Activated CD4-positive, alpha-beta memory T cell treated with anti-CD3 and anti-CD28 coated beads, Interleukin-2, amount 10 ng/mL, durations not matched to agents 7 days and 5 days (primary cell): ENCODE measurements at regions of chr1 and their contacts with region 1.

Region 1: DNA sequence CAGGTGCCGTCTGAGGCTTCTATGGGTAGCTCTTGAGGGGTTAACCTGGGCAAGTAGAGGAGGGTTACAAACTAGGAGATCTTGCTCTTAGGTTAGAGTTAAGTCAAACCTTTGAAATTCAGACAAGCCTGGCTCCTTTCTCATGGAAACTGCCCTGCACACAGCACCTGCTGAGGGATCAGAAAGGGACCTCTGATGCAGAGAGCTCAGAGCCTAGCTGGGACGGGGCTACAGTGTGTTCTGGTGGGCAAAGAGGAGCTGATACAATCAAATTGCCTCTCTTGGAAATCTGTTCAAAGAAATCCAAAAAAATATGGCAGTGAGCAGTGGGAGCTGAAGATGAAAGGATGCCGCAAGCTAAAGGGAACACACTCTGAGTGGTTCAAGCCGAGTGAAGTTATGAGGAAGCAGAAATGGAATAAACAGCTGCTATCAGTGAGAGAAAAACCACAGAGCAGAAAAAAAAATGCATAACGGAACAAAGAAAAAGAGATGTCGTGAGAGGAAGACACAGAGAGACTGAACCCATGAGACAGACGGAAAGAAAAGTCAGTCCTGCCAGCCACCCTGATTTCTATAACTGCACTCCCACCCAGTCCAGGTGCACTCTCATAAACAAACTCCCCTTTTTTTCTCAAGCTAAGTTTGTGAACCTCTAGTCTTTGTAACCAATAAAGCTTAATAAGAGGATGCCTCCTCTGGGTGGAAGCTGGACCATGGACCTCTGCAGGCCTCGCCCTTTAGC is 26.6 kb downstream of the PAFAH2 start:
- DNase-seq: no peak
- H3K4me3 Mint-ChIP-seq: no peak overlapping the region
- H3K27ac Mint-ChIP-seq: peak overlapping the region; percentile 72
- H3K4me1 Mint-ChIP-seq: peaks cover 19% of the 10 kb centered on the region
- H3K27me3 Mint-ChIP-seq: no peaks in the 10 kb centered on the region

Region 2: DNA sequence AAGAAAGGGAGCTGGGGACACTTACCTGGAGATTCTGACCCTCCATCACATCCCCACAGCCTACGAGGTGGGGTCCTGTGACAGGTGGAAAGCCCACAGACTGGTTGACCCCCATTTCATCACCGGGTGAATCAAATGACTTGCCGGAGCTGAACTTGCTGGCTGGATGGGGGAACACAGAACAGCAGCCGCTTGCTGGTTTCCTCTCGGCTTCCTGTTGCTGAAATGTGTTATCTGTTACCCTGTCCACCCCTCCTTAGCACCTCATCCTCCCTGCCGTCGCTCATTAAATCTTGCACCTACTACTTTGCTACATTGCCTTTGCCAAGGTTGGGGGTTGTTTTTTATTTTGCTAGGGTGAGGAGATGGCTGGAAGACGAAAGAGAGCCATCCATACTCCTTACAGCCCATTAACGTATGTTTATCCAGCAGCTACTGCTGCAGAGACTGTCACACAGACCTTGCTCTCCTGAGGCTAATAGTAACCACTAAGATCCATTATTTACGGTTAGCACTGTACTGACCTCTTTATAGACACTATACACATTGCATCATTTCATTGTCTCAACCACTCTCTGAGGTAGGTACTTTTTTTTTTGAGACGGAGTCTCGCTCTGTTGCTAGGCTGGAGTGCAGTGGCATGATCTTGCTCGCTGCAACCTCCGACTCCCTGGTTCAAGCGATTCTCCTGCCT is 19.6 kb after region 1 on chr1:
- CTCF ChIA-PET with region 1: interaction called, 5 read pairs
- POLR2A ChIA-PET with region 1: interaction called, 23 read pairs
- DNase-seq: peak; percentile 61
- H3K4me3 Mint-ChIP-seq: peak overlapping the region; percentile 78
- H3K27ac Mint-ChIP-seq: peak overlapping the region; percentile 72
- H3K4me1 Mint-ChIP-seq: peaks cover 38% of the 10 kb centered on the region
- H3K27me3 Mint-ChIP-seq: no peaks in the 10 kb centered on the region

Region 3: DNA sequence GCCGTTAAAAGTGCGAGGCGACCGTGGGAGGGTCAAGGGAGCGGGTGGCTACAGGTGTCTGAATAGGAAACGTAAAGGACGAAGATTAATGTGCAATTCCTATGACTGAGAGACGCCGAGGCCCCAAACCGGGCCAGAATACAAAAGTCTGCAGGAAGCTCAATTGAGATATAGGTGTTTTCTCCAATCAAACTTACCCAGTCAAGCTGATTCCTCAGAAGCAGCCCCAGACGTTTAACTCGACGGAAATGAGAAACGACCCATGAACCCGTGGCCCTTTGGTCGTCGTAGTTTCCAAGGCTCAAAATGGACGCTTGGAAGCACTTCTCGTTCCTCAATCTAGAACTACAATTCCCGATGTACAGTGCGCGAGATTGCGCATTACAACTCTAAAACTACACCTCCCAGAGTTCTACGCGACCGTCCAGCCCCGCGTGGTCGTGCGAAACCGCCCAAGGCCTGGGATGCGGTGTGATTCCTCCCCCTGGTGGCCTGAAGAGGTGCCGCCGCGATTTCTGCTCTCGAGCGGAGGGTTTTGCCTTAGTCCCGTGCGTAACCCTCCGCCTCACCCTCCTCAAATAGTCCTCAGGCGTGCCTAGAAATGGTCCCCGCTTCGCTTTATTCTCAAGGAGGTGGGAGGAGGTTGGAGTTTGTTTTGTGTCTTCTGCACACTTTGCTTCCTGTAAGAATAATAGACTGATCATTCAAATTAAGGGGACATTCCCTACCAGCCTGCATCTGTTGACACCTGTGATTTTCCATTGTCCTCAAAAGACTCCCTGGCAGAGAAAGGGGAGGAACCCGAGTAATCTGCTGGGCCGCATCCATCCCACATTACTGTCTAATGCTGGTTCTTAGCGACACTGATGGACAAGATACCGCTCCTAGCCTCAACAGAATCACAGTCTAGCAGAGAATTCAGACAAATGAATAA is 26.9 kb after region 1 on chr1 and contains the start of gene PAFAH2:
- CTCF ChIA-PET with region 1: interaction called, 14 read pairs
- POLR2A ChIA-PET with region 1: interaction called, 22 read pairs
- DNase-seq: peak; percentile 97
- H3K4me3 Mint-ChIP-seq: peak within 1 kb of the TSS; percentile 84
- H3K27ac Mint-ChIP-seq: peak within 1 kb of the TSS; percentile 91
- H3K4me1 Mint-ChIP-seq: peaks cover 20% of the 10 kb centered on the region
- H3K27me3 Mint-ChIP-seq: no peaks in the 10 kb centered on the region
- total RNA-seq, gene PAFAH2: 9.4 to 10.1 TPM

Region 4: DNA sequence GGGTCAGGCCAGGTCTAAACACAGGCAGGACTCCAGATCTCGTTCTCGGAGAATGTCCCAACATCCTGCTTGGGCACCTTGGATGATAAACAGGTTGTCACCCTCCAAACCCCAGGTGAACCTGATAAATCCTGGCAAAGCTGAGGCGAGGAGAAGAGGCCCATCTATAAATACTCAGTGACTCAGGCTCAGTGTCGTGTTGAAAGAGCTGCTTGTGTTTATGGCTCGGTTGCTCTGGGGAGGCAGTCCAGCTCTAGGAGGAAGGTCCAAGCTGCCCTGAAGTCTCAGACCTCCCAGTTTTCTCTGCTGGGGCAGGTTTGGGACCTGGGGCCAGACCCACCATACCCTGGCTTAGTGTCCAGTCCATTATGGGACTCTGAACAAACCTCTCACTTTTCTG is 112.0 kb after region 1 on chr1:
- CTCF ChIA-PET with region 1: no interaction called
- POLR2A ChIA-PET with region 1: no interaction called
- DNase-seq: no peak
- H3K4me3 Mint-ChIP-seq: no peak overlapping the region
- H3K27ac Mint-ChIP-seq: no peak overlapping the region
- H3K4me1 Mint-ChIP-seq: no peaks in the 10 kb centered on the region
- H3K27me3 Mint-ChIP-seq: peaks cover 32% of the 10 kb centered on the region